ENCODE measurements at regions of chr22 and their contacts with region 1.

Region 1: DNA sequence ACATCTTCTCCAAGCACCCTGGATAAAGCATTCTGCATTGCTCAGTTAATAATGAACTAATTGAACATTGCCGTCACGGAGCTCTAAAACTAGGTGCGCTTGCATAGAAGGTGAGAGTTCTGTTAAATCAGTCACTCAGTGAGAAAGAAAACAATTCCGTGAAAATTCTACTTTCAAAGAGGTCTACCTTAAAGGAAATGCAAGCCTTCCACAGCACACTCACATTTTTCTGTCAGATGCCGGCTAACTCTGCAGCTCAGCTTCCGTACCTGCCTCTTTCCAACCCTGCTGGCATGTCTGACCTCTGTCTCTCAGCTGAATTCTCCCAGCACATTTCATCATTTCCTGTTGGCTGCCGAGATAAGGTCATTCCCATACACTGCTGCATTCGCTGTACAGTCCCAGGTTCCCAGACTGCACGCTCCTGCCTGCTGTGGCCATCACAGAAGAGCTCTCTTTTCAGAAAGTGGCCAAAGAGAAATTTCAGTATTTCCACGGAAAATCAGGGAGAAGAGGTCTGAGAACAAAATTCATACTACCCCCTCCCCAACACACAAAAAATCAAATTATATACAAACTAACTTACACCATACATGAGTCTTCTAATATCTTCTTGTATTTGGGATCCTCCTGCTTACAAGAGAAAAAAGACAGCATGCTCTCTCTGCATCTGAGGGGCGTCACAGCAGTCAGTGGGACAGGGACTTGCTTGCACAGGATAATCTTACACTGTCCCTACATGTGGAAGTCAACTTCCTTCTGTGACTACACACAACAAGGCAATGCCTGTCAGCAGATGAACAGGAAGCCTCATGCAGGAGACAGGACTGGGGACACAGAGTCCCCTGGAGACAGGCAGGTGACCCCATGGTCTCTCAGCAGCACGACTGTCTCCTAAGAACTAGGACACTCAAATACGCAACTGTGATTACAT is 55.1 kb downstream of the PACSIN2 start:
- DNase-seq: peak; percentile 38 to 79
- ATAC-seq: peak; percentile 86 to 94 (median 92)
- H3K4me3 ChIP-seq: peak overlapping the region; percentile 4 to 57 (median 46)
- H3K27ac ChIP-seq: peak overlapping the region; percentile 14 to 81 (median 67)
- H3K4me1 ChIP-seq: peaks cover 16 to 77% (median 58%) of the 10 kb centered on the region in 9 donors
- H3K27me3 ChIP-seq: no peaks in the 10 kb centered on the region
- CTCF ChIP-seq: no peak

Region 2: DNA sequence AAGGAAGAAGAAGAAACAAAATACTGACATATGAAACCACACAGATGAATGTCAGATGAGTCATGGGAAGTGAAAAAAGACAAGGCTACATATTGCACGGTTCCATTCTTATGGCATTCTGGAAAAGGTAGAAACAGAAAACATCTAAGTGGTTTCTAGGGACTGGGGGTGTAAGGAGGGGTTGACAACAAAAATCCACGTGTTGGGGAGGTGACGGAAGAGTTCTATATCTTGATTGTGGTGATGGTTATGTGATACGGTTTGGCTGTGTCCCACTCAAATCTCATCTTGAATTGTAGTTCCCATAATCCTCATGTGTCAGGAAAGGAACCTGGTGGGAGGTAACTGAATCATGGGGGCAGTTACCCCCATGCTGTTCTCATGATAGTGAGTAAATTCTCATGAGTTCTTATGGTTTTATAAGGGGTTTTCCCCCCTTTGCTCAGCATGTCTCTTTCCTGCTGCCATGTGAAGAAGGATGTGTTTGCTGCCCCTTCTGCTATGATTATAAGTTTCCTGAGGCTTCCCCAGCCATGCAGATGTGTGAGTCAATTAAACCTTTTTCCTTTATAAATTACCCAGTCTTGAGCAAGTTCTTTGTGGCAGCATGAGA is 96.4 kb before region 1 on chr22:
- intact Hi-C with region 1: loop called in 3 of 10 experiments (anchors 5 to 10 kb)
- DNase-seq: no peak
- ATAC-seq: no peak
- H3K4me3 ChIP-seq: no peak overlapping the region
- H3K27ac ChIP-seq: peak overlapping the region in 1 of 10 donors; percentile 0
- H3K4me1 ChIP-seq: peaks cover under 1 to 23% (median 4%) of the 10 kb centered on the region in 9 donors
- H3K27me3 ChIP-seq: no peaks in the 10 kb centered on the region
- CTCF ChIP-seq: no peak

Region 3: GRCh38 chr22:42901790-42902508 is 57.9 kb before region 1 on chr22:
- intact Hi-C with region 1: loop called in 2 of 10 experiments (anchors 10 kb)
- DNase-seq: peak; percentile 61 to 74
- ATAC-seq: peak; percentile 59 to 84 (median 76)
- H3K4me3 ChIP-seq: no peak overlapping the region
- H3K27ac ChIP-seq: peak overlapping the region in 9 of 10 donors; percentile 40 to 84 (median 69)
- H3K4me1 ChIP-seq: peaks cover 37 to 90% (median 75%) of the 10 kb centered on the region in 9 donors
- H3K27me3 ChIP-seq: no peaks in the 10 kb centered on the region
- CTCF ChIP-seq: peak in 4 of 9 donors; percentile 21 to 34 (median 31)

Region 4: DNA sequence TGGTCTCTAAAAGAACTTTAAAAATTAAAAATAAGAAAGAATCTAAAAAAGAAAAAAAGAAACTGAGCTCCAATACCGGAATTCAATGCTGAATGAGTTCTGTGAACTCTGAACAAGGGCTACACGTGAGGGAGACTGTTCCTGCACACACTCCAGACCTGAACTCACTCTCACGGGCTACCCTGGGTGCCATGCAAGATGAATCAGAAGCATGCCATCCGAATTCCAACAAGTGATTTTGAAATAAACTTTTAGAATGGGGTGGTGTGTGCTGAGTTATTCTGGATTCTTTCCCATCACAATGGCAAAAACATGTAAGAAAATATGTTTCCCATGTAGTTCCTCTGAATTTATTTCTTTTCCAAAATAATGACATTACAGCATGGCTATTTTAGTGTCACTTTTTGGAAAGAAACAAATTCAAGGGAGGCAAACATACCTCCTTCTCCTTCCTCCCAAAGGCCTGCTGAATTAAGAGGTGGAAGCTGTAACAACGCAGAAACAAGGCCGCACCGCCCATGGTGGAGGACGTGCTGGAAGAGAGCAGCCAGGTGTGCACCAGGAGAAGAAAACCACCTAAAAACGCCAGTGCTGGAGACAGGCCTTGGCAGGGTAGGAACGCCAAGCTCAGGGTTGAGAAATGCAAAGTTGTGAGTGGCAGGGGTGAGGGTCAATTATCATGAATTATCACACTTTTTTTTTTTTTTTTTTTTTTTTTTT is 39.6 kb before region 1 on chr22:
- intact Hi-C with region 1: loop called in 2 of 10 experiments (anchors 5 kb)
- DNase-seq: no peak
- ATAC-seq: peak in 3 of 8 donors; percentile 36 to 49 (median 47)
- H3K4me3 ChIP-seq: no peak overlapping the region
- H3K27ac ChIP-seq: peak overlapping the region in 5 of 10 donors; percentile 9 to 51 (median 47)
- H3K4me1 ChIP-seq: peaks cover 13 to 89% (median 66%) of the 10 kb centered on the region in 9 donors
- H3K27me3 ChIP-seq: no peaks in the 10 kb centered on the region
- CTCF ChIP-seq: no peak

Region 5: GRCh38 chr22:42928969-42929837 is 30.6 kb before region 1 on chr22:
- intact Hi-C with region 1: loop called in 2 of 10 experiments (anchors 5 kb)
- DNase-seq: no peak
- ATAC-seq: peak in 1 of 8 donors; percentile 57
- H3K4me3 ChIP-seq: no peak overlapping the region
- H3K27ac ChIP-seq: peak overlapping the region in 9 of 10 donors; percentile 80 to 91 (median 86)
- H3K4me1 ChIP-seq: peaks cover 43 to 98% (median 88%) of the 10 kb centered on the region in 9 donors
- H3K27me3 ChIP-seq: no peaks in the 10 kb centered on the region
- CTCF ChIP-seq: no peak

Region 6: GRCh38 chr22:43014869-43015676 is 55.2 kb after region 1 on chr22 and contains the start of gene PACSIN2:
- intact Hi-C with region 1: loop called in 2 of 10 experiments (anchors 10 kb)
- DNase-seq: peak; percentile 100
- ATAC-seq: peak; percentile 99 to 100 (median 100)
- H3K4me3 ChIP-seq: peak within 1 kb of the TSS; percentile 54 to 92 (median 82)
- H3K27ac ChIP-seq: peak within 1 kb of the TSS; percentile 57 to 81 (median 74)
- H3K4me1 ChIP-seq: peaks cover 4 to 34% (median 16%) of the 10 kb centered on the region in 9 donors
- H3K27me3 ChIP-seq: no peaks in the 10 kb centered on the region
- CTCF ChIP-seq: no peak
- total RNA-seq, gene PACSIN2: 45.0 to 69.7 (median 57.8) TPM